ENCODE measurements at regions of chr7 and their contacts with region 1.

Region 1: DNA sequence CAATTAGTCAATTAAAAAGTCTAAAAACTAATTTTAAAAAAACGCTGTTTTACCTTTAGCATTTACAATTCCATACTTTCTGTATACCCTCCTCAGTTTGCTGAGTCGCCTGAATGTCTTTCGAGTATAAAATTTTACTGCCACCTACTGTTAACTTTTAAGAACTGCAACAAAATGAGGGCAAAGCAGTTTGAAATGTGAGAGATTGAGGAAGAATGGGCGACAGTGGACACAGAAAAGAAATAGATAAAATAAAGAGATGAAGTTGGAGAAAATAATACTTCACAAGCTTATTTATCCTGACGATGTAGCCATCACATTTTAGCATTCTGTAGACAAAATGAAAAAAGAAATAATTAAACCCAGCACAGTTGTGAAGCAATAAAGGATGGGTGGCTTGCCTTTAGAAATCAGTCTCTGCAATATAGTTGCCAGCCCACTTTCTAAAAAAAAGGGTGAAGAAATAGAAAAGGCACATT is 110.8 kb upstream of the PTN start:
- DNase-seq: no peak
- ATAC-seq: no peak
- H3K4me3 Mint-ChIP-seq: no peak overlapping the region
- H3K27ac Mint-ChIP-seq: no peak overlapping the region
- H3K4me1 Mint-ChIP-seq: no peaks in the 10 kb centered on the region
- H3K27me3 Mint-ChIP-seq: peaks cover 9% of the 10 kb centered on the region

Region 2: GRCh38 chr7:136114966-136115762 is 1339.1 kb before region 1 on chr7:
- CTCF ChIA-PET with region 1: no interaction called
- POLR2A ChIA-PET with region 1: no interaction called
- intact Hi-C with region 1: loop called in 1 of 2 experiments (anchors 10 kb)
- DNase-seq: peak; percentile 75
- ATAC-seq: peak; percentile 86
- H3K4me3 Mint-ChIP-seq: no peak overlapping the region
- H3K27ac Mint-ChIP-seq: no peak overlapping the region
- H3K4me1 Mint-ChIP-seq: no peaks in the 10 kb centered on the region
- H3K27me3 Mint-ChIP-seq: peaks cover 3% of the 10 kb centered on the region

Region 3: GRCh38 chr7:136405931-136406777 is 1048.1 kb before region 1 on chr7:
- CTCF ChIA-PET with region 1: no interaction called
- POLR2A ChIA-PET with region 1: no interaction called
- intact Hi-C with region 1: loop called (anchors 1 to 5 kb)
- DNase-seq: peak; percentile 44
- ATAC-seq: peak; percentile 63
- H3K4me3 Mint-ChIP-seq: no peak overlapping the region
- H3K27ac Mint-ChIP-seq: no peak overlapping the region
- H3K4me1 Mint-ChIP-seq: peaks cover 6% of the 10 kb centered on the region
- H3K27me3 Mint-ChIP-seq: peaks cover 5% of the 10 kb centered on the region

Region 4: DNA sequence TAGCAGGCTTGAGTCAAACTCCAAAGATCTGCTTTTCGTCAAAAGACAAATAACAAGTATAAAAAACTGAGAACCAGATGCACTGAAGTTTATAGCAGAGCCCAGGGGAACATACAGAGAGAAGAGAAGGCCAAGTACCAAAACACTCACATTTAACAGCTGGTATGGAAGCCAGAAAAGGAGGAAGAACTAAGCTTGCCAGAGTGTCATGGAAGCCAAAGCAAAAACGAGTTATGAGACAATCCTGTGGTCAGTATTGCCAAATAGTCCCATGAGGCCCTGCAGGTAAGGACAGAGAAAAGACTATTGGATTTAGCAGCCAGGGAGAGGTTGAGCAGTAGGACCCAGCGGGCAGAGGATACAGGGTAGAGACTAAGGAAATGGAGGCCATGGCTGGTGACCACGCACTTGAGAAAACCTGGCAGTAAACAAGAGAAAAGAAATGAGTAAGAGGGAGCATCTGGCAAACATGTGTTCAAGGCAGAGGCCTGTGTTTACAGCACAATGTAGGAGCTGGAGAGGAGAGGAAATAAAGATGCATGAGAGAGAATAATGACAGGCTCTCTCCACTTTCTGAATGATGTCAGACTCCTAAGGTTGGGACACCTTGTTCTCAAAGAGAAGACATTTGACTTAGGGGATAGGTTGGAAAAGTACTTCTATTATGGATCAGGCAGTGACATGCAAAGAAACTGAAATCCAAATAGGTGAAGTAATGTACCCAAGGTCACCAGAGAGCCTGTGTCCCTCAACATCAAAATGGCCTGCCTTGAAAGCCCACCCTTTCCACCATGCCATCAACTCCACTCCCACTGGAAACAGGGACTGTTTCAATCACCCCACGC is 538.5 kb after region 1 on chr7:
- CTCF ChIA-PET with region 1: no interaction called
- POLR2A ChIA-PET with region 1: no interaction called
- intact Hi-C with region 1: no loop called
- DNase-seq: peak; percentile 58
- ATAC-seq: peak; percentile 95
- H3K4me3 Mint-ChIP-seq: no peak overlapping the region
- H3K27ac Mint-ChIP-seq: peak overlapping the region; percentile 32
- H3K4me1 Mint-ChIP-seq: peaks cover 27% of the 10 kb centered on the region
- H3K27me3 Mint-ChIP-seq: no peaks in the 10 kb centered on the region

Measured in activated CD4-positive, alpha-beta T cell treated with anti-CD3 and anti-CD28 coated beads for 36 hours (primary cell).